Adrenal gland (tissue), 19 donors: ENCODE measurements at regions of chr5 and their contacts with region 1.

Region 1: GRCh38 chr5:148179234-148179824 is 11.0 kb downstream of the SPINK14 start:
- DNase-seq: peak in 4 of 7 donors; percentile 13 to 19 (median 17)
- H3K4me3 ChIP-seq: no peak overlapping the region
- H3K27ac ChIP-seq: no peak overlapping the region
- H3K4me1 ChIP-seq: no peaks in the 10 kb centered on the region
- H3K27me3 ChIP-seq: peaks cover 14% of the 10 kb centered on the region
- CTCF ChIP-seq: peak; percentile 46 to 89 (median 76)
- POLR2A ChIP-seq: no peak

Region 2: DNA sequence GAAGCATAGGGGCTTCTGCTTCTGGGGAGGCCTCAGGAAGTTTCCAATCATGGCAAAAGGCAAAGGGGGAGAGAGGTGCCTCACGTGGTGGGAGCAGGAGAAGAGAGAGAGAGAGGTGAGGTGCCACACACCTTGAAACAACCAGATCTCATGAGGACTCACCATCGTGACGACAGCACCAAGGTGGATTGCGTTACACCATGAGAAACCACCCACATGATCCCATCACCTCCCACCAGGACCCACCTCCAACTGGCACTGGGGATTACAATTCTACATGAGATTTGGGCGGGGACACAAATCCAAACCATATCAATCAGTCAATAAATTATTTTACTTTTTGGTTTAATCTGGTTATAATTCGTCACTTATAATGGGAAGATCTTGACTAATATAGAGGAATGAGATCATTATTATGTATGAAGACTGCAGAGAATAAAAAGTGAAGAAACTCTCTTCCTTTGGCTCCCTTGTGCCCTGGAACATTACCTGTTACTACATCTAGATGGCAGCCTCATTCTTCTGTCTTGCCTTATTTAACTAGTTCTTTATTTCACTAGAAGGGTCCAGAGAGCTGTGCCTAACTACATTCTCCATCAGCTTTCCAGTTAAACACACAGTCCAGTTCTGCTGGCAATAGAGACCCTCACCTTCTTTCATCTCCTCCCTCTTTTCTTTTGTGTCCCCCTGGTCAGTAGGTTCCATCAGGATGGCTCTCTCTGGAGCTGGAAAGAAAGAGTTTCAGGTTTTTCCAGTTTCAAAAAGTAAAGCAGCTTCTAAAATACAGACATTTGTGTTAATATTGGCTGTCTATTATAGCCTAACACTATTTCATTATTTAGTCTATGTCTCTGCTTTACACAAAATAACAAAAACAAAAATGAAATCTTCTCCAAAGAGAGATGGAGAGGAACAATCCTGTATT is 111.2 kb after region 1 on chr5:
- intact Hi-C with region 1: no loop called
- DNase-seq: no peak
- H3K4me3 ChIP-seq: no peak overlapping the region
- H3K27ac ChIP-seq: no peak overlapping the region
- H3K4me1 ChIP-seq: no peaks in the 10 kb centered on the region
- H3K27me3 ChIP-seq: no peaks in the 10 kb centered on the region
- CTCF ChIP-seq: peak; percentile 18 to 44 (median 36)
- POLR2A ChIP-seq: no peak

Region 3: DNA sequence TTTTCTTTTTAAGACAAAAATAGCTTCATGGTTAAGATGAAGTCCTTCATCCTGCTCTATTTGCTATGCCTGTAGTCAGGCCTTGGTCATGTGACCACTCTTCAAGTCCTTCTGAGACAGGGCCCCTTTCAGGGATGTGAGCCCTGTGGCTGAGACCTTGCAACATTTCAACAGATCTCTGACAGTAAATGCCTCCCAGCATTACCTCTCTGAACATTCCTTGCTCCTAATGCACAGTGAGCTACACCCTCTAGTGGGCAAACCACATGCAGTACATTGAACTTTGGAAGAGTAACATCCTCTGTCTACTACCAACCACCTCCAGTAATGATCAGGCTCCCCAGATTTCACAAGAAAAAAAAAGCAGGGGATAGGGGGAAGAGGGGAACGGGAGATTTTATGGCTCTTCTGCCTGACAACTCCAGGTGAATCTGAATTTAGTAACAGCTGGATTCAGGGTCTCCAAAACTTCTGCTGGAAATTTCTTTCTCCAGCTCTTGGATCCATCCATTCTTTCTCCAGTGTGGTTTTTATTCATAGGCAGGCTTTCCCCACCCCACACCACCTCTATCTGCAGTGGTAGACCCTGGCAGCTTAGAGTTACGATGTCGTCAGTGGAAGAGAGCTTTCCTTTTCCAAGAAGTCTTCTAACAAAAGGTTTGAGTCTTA is 195.5 kb after region 1 on chr5:
- intact Hi-C with region 1: loop called (anchors 2 to 10 kb)
- DNase-seq: peak; percentile 35 to 74 (median 65)
- H3K4me3 ChIP-seq: no peak overlapping the region
- H3K27ac ChIP-seq: no peak overlapping the region
- H3K4me1 ChIP-seq: peaks cover 0 to 8% of the 10 kb centered on the region in 2 donors
- H3K27me3 ChIP-seq: no peaks in the 10 kb centered on the region
- CTCF ChIP-seq: peak; percentile 77 to 88 (median 80)
- POLR2A ChIP-seq: no peak